ENCODE measurements at regions of chr12 and their contacts with region 1.

Region 1: GRCh38 chr12:101414533-101415119 is 7.1 kb upstream of the ARL1 start:
- DNase-seq: peak; percentile 88
- ATAC-seq: peak; percentile 73
- H3K4me3 ChIP-seq: no peak overlapping the region
- H3K27ac ChIP-seq: no peak overlapping the region
- H3K4me1 ChIP-seq: peaks cover 4% of the 10 kb centered on the region; the same call in 1 of the 2 replicates
- H3K27me3 ChIP-seq: no peaks in the 10 kb centered on the region
- CTCF ChIP-seq: peak; percentile 88

Region 2: DNA sequence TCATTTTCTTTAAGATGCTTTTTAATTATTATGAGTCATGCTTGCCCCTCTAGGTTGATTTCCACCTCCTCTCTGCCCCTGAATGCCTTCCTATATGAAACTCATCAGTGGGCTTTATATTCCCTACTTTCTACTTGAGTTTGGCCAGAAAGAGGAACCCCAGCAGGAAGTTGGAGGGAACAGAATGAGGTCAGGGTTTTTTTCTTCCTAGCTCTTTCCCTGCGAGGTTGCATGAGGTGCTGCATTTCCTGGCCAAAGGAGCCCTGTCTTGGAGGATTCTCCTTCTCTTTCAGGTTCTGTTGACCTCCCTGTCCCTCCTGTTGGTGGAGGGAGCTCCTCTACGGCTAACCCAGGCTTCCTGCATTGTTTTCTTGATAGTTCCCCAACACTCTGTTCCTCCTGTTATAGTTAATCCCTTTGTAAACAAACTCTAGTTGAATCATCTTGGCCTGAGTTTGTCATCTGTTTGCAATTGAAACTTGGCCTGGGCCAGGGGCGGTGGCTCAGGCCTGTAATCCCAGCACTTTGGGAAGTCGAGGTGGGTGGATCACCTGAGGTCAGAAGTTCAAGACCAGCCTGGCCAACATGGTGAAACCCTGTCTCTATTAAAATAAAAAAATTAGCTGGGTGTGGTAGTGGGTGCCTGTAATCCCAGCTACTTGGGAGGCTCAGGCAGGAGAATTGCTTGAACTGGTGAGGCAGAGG is 45.2 kb after region 1 on chr12:
- CTCF ChIA-PET with region 1: no interaction called
- POLR2A ChIA-PET with region 1: no interaction called
- intact Hi-C with region 1: loop called (anchors 5 kb)
- DNase-seq: peak; percentile 94
- ATAC-seq: peak; percentile 100
- H3K4me3 ChIP-seq: no peak overlapping the region
- H3K27ac ChIP-seq: peak overlapping the region; percentile 43
- H3K4me1 ChIP-seq: peaks cover 10% of the 10 kb centered on the region
- H3K27me3 ChIP-seq: no peaks in the 10 kb centered on the region
- CTCF ChIP-seq: no peak

Region 3: DNA sequence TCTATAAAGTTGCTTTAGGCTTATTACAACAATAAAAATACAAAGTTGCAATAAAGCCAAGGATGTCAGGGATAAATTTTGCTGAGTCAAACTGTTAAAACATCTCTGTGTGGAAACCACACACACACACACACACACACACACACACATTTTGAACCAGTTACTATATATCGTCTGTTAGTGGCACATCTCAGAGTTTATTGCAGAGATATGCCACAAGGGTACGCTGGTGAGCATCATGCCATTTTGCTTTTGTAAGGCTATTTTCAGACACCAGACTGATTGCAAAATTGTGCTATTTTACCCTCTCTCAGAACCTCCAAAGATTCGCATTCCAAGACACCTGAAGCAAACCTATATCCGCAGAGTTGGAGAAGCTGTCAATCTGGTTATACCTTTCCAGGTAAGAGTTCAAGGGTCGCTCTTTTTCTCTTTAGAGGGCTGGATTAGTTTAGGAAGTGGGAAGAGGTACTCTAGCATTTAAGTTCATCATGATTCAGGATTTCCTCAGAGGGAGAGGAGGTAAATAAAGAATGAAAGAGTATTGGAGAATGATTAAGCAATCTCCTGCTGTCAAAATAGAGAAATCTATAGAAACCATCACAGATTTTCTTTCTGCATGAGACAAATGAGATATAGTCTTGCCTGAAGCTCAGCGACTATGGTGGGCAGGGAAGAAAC is 255.5 kb after region 1 on chr12:
- CTCF ChIA-PET with region 1: no interaction called
- POLR2A ChIA-PET with region 1: no interaction called
- intact Hi-C with region 1: loop called (anchors 1 kb)
- DNase-seq: peak; percentile 54
- ATAC-seq: peak; percentile 45; the same call in 1 of the 2 replicates
- H3K4me3 ChIP-seq: no peak overlapping the region
- H3K27ac ChIP-seq: no peak overlapping the region
- H3K4me1 ChIP-seq: no peaks in the 10 kb centered on the region
- H3K27me3 ChIP-seq: peaks cover 37% of the 10 kb centered on the region
- CTCF ChIP-seq: peak; percentile 64

Region 4: GRCh38 chr12:101759396-101760047 is 344.9 kb after region 1 on chr12:
- CTCF ChIA-PET with region 1: interaction called, 3 read pairs
- POLR2A ChIA-PET with region 1: no interaction called
- intact Hi-C with region 1: loop called (anchors 1 kb)
- DNase-seq: peak; percentile 72
- ATAC-seq: peak; percentile 83
- H3K4me3 ChIP-seq: no peak overlapping the region
- H3K27ac ChIP-seq: no peak overlapping the region
- H3K4me1 ChIP-seq: peaks cover 4% of the 10 kb centered on the region; the same call in 1 of the 2 replicates
- H3K27me3 ChIP-seq: no peaks in the 10 kb centered on the region
- CTCF ChIP-seq: peak; percentile 92

Region 5: DNA sequence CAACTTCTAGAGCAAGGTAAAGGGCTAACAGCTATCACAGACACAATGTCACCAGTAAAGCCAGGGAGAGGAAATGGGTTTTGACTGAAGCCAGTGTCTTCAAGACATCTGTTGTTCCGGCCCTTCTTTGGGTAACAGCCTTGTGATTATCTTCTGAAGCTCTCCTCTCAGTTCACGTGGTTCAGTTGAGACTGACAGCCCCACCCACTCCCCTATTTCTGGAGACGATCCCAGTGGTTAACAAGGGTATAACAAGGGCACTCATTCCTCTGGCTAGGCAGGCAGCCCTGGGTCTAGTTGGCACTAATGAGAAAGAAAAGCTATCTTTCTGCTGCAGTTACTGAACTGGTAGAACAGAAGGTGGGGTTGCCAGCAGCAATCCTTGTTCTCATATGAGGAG is 409.3 kb after region 1 on chr12:
- CTCF ChIA-PET with region 1: no interaction called
- POLR2A ChIA-PET with region 1: interaction called, 11 read pairs
- intact Hi-C with region 1: no loop called
- DNase-seq: peak; percentile 64
- ATAC-seq: peak; percentile 89
- H3K4me3 ChIP-seq: no peak overlapping the region
- H3K27ac ChIP-seq: no peak overlapping the region
- H3K4me1 ChIP-seq: no peaks in the 10 kb centered on the region
- H3K27me3 ChIP-seq: no peaks in the 10 kb centered on the region
- CTCF ChIP-seq: peak; percentile 27; the same call in 1 of the 2 replicates

Measured in PC-3 (cell line).